Ascending aorta (tissue), 2 donors: ENCODE measurements at regions of chr6 and their contacts with region 1.

Region 1: DNA sequence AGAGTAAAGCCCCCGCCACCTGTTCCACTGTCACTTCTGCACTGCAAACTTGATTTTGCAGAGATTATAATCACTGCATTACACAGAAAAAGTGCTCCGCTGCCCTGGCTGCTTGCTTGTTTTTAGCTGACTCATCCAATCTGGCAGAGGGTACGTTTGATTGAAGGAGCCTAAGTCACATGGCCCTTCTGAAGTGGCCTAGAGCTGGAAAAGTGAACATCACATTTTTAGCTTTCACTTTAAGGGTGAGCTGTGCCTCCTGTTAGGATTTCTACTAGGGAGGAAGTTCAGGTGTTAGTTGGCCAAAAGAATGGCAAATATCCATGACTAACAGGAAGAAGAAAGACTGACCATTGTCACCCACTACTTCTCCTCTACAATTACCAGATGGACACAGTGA is 889.1 kb upstream of the MAP3K7 start:
- DNase-seq: no peak
- H3K4me3 ChIP-seq: no peak overlapping the region
- H3K27ac ChIP-seq: no peak overlapping the region
- H3K4me1 ChIP-seq: peaks cover 0 to 5% of the 10 kb centered on the region in 2 donors
- H3K27me3 ChIP-seq: no peaks in the 10 kb centered on the region
- CTCF ChIP-seq: no peak

Region 2: GRCh38 chr6:91521999-91522398 is 46.0 kb after region 1 on chr6:
- intact Hi-C with region 1: loop called (anchors 1 kb)
- DNase-seq: no peak
- H3K4me3 ChIP-seq: no peak overlapping the region
- H3K27ac ChIP-seq: no peak overlapping the region
- H3K4me1 ChIP-seq: no peaks in the 10 kb centered on the region
- H3K27me3 ChIP-seq: no peaks in the 10 kb centered on the region
- CTCF ChIP-seq: no peak

Region 3: GRCh38 chr6:92415649-92416048 is 939.7 kb after region 1 on chr6:
- intact Hi-C with region 1: no loop called
- DNase-seq: no peak
- H3K4me3 ChIP-seq: no peak overlapping the region
- H3K27ac ChIP-seq: no peak overlapping the region
- H3K4me1 ChIP-seq: no peaks in the 10 kb centered on the region
- H3K27me3 ChIP-seq: no peaks in the 10 kb centered on the region
- CTCF ChIP-seq: no peak